Psoas muscle (tissue), 8 donors: ENCODE measurements at regions of chr4 and their contacts with region 1.

Region 1: GRCh38 chr4:13611283-13611842 is 16.2 kb downstream of the BOD1L1 start:
- DNase-seq: no peak
- ATAC-seq: no peak
- H3K4me3 ChIP-seq: no peak overlapping the region
- H3K27ac ChIP-seq: no peak overlapping the region
- H3K4me1 ChIP-seq: no peaks in the 10 kb centered on the region
- H3K27me3 ChIP-seq: no peaks in the 10 kb centered on the region
- CTCF ChIP-seq: no peak

Region 2: GRCh38 chr4:13570916-13571315 is 40.4 kb before region 1 on chr4:
- intact Hi-C with region 1: loop called (anchors 5 kb)
- DNase-seq: no peak
- ATAC-seq: no peak
- H3K4me3 ChIP-seq: no peak overlapping the region
- H3K27ac ChIP-seq: no peak overlapping the region
- H3K4me1 ChIP-seq: no peaks in the 10 kb centered on the region
- H3K27me3 ChIP-seq: no peaks in the 10 kb centered on the region
- CTCF ChIP-seq: no peak

Region 3: DNA sequence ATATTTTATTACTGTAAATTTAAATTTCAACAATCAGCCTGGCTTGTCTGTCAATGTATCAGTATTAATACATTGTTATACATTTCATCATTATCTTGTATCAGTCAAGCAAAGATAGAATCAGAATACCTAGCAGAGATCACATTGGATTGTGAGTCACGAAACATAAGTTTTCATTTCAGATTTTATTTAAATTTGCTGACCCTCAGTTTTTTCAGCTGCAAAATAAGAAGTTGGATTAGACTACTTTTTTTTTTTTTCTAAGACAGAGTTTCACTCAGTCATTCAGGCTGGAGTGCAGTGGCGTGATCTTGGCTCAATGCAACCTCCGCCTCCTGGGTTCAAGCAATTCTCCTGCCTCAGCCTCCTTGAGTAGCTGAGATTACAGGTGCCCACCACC is 33.7 kb before region 1 on chr4:
- intact Hi-C with region 1: loop called (anchors 5 kb)
- DNase-seq: no peak
- ATAC-seq: no peak
- H3K4me3 ChIP-seq: no peak overlapping the region
- H3K27ac ChIP-seq: no peak overlapping the region
- H3K4me1 ChIP-seq: no peaks in the 10 kb centered on the region
- H3K27me3 ChIP-seq: no peaks in the 10 kb centered on the region
- CTCF ChIP-seq: no peak